Activated CD8-positive, alpha-beta memory T cell treated with anti-CD3 and anti-CD28 coated beads, Interleukin-2, amount 10 ng/mL, durations not matched to agents 7 days and 5 days (primary cell): ENCODE measurements at regions of chr17 and their contacts with region 1.

Region 1: GRCh38 chr17:76557368-76558197 is 17.7 kb downstream of the PRCD start:
- DNase-seq: peak; percentile 97
- ATAC-seq: peak; percentile 91
- H3K4me3 Mint-ChIP-seq: peak overlapping the region; percentile 98
- H3K27ac Mint-ChIP-seq: peak overlapping the region; percentile 96
- H3K4me1 Mint-ChIP-seq: peaks cover 60% of the 10 kb centered on the region
- H3K27me3 Mint-ChIP-seq: no peaks in the 10 kb centered on the region

Region 2: GRCh38 chr17:76523084-76524037 is 34.2 kb before region 1 on chr17:
- CTCF ChIA-PET with region 1: interaction called, 46 read pairs
- DNase-seq: peak; percentile 85
- ATAC-seq: peak; percentile 88
- H3K4me3 Mint-ChIP-seq: peak overlapping the region; percentile 8
- H3K27ac Mint-ChIP-seq: no peak overlapping the region
- H3K4me1 Mint-ChIP-seq: peaks cover 15% of the 10 kb centered on the region
- H3K27me3 Mint-ChIP-seq: peaks cover 7% of the 10 kb centered on the region

Region 3: GRCh38 chr17:76547184-76547641 is 10.4 kb before region 1 on chr17:
- CTCF ChIA-PET with region 1: interaction called, 43 read pairs
- DNase-seq: peak; percentile 75
- ATAC-seq: peak; percentile 90
- H3K4me3 Mint-ChIP-seq: no peak overlapping the region
- H3K27ac Mint-ChIP-seq: no peak overlapping the region
- H3K4me1 Mint-ChIP-seq: peaks cover 5% of the 10 kb centered on the region
- H3K27me3 Mint-ChIP-seq: peaks cover 11% of the 10 kb centered on the region

Region 4: GRCh38 chr17:76585818-76586593 is 28.4 kb after region 1 on chr17 and contains the start of gene ST6GALNAC2:
- CTCF ChIA-PET with region 1: interaction called, 10 read pairs
- DNase-seq: peak; percentile 51
- ATAC-seq: peak; percentile 80
- H3K4me3 Mint-ChIP-seq: peak within 1 kb of the TSS; percentile 38
- H3K27ac Mint-ChIP-seq: no peak within 1 kb of the TSS
- H3K4me1 Mint-ChIP-seq: peaks cover 6% of the 10 kb centered on the region
- H3K27me3 Mint-ChIP-seq: peaks cover 61% of the 10 kb centered on the region
- total RNA-seq, gene ST6GALNAC2: not detected

Region 5: DNA sequence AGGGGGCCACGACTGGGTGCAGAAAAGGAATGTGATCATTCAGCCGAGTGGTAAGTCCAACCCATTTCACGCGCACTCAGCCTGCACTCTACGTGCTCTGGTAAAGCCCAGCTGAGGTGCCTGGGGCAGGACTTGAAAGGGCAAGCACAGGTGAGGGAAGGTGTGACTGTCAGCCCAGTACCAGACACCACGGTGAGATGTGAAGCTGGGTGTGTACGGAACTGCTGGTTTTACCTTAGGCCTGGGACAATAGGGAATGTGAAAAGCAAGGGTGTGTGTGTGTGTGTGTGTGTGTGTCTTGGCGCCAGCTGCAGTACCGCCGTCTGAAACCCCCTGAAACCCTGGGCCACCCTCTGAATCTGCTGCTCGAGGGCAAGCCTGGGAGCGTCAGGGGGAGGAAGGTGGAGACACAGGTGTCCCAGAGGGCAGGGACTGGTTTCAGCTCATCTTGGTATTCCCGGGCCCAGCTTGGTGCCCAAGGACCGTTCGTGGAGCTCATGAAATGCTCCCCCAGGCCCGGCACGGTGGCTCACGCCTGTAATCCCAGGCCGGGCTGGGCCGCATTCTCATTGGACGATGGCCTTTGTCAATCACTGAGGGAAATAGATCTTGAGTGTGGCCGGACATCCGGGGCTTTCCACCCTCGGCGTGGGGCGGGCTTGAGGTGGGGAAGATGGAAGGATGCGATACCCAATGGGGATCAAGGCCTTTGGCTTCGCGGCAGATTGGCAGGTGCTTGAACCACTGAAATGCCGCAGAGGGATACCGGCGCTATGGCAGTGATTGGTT is 113.7 kb after region 1 on chr17:
- CTCF ChIA-PET with region 1: interaction called, 14 read pairs
- DNase-seq: peak; percentile 100
- ATAC-seq: peak; percentile 99
- H3K4me3 Mint-ChIP-seq: peak overlapping the region; percentile 90
- H3K27ac Mint-ChIP-seq: peak overlapping the region; percentile 88
- H3K4me1 Mint-ChIP-seq: peaks cover 26% of the 10 kb centered on the region
- H3K27me3 Mint-ChIP-seq: peaks cover 6% of the 10 kb centered on the region

Region 6: GRCh38 chr17:76681222-76682137 is 123.9 kb after region 1 on chr17:
- CTCF ChIA-PET with region 1: interaction called, 40 read pairs
- DNase-seq: peak; percentile 82
- ATAC-seq: peak; percentile 70
- H3K4me3 Mint-ChIP-seq: no peak overlapping the region
- H3K27ac Mint-ChIP-seq: no peak overlapping the region
- H3K4me1 Mint-ChIP-seq: peaks cover 12% of the 10 kb centered on the region
- H3K27me3 Mint-ChIP-seq: no peaks in the 10 kb centered on the region

Region 7: GRCh38 chr17:76714822-76715495 is 157.4 kb after region 1 on chr17:
- CTCF ChIA-PET with region 1: interaction called, 33 read pairs
- DNase-seq: peak; percentile 86
- ATAC-seq: peak; percentile 2
- H3K4me3 Mint-ChIP-seq: peak overlapping the region; percentile 49
- H3K27ac Mint-ChIP-seq: peak overlapping the region; percentile 94
- H3K4me1 Mint-ChIP-seq: peaks cover 56% of the 10 kb centered on the region
- H3K27me3 Mint-ChIP-seq: no peaks in the 10 kb centered on the region